ENCODE measurements at regions of chr7 and their contacts with region 1.

Region 1: DNA sequence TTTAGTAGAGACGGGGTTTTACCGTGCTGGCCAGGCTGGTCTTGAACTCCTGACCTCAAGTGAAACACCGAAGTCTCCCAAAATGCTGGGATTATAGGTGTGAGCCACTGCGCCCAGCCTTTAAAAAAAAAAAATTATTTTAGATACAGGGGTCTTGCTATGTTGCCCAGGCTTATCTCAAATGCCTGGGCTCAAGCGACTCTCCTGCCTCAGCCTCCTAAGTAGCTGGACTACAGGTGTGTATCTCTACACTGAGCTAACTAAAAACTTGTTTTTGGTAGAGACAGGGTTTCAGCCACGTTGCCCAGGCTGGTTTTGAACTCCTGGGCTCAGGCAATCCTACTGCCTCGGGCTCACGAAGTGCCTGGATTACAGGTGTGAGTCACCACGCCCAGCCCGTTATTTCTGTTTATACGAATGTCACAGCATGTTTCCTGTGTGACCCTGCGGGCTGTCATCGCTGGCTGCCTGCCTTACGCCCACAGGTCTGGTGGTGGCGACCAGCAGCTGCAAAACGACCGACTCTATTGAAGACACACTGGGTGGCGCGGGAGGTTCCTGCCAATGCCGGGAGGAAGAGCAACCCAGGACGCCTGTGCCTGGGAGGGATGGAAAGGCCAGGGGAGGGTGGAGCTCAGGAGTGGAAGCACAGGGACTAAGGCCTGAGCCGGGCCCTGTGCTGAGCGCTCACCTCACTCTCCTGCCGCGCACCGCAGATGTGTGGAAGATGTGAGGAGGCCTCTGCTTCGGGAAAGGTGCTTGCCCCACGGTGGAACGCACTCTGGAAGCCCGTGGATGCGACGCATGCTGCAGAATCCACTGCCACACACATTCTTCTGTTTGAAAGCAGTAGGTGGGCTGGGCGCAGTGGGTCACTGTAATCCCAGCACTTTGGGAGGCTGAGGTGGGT is 32.8 kb downstream of the AMZ1 start:
- DNase-seq: peak; percentile 24 to 86 (median 66)
- ATAC-seq: peak; percentile 32
- H3K4me3 ChIP-seq: no peak overlapping the region
- H3K4me3 Mint-ChIP-seq: peak overlapping the region; percentile 42
- H3K27ac ChIP-seq: no peak overlapping the region
- H3K27ac Mint-ChIP-seq: peak overlapping the region; percentile 89
- H3K4me1 ChIP-seq: peaks cover 42% of the 10 kb centered on the region
- H3K4me1 Mint-ChIP-seq: peaks cover 55% of the 10 kb centered on the region
- H3K27me3 ChIP-seq: no peaks in the 10 kb centered on the region
- H3K27me3 Mint-ChIP-seq: peaks cover 9% of the 10 kb centered on the region
- CTCF ChIP-seq: no peak

Region 2: DNA sequence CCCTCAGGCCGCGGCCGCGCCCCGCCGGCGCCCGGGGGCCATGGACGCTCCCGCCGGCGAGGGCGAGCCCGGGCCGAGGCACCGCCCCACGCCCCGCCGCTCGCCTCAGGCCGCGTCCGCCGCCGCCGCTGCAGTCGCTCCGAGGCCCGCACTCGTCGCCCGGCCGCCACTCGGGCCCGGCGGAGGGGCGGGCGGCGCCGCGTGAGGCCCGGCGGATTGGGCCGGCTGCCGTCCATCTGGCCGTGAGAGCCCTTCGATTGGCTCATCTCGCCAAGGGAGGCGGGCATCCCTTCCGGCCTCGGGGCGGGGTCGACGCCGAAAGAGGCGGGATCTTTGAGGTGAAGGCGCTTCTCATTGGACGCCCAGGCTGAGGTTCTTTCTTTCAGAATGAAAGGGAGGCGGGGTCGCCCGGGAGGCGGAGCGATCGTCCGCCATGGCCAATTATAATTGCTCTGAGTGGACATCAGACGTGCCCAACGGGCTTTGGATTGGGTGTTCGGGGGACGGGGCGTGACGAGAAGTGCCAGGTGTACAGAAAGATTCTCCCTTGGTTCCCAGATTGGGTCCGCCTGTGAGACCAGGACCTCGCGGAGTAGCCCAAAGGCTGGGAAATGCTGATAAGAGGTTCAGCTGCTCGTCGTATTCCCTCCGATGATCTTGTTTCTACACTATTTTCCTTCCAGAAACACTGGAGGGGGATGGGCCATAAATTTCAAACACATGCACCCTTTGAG is 123.5 kb after region 1 on chr7 and contains the start of gene GNA12:
- CTCF ChIA-PET with region 1: no interaction called
- POLR2A ChIA-PET with region 1: no interaction called
- intact Hi-C with region 1: loop called (anchors 5 kb)
- DNase-seq: peak; percentile 96 to 99 (median 98)
- ATAC-seq: peak; percentile 94
- H3K4me3 ChIP-seq: peak within 1 kb of the TSS; percentile 51 to 58
- H3K4me3 Mint-ChIP-seq: peak within 1 kb of the TSS; percentile 93
- H3K27ac ChIP-seq: peak within 1 kb of the TSS in 1 of 2 experiments; percentile 22
- H3K27ac Mint-ChIP-seq: peak within 1 kb of the TSS; percentile 81
- H3K4me1 ChIP-seq: peaks cover 21% of the 10 kb centered on the region
- H3K4me1 Mint-ChIP-seq: peaks cover 44% of the 10 kb centered on the region
- H3K27me3 ChIP-seq: no peaks in the 10 kb centered on the region
- H3K27me3 Mint-ChIP-seq: no peaks in the 10 kb centered on the region
- CTCF ChIP-seq: no peak
- total RNA-seq, gene GNA12: 17.0 to 17.7 TPM